Endothelial cell of umbilical vein (primary cell): ENCODE measurements at regions of chr7 and their contacts with region 1.

Region 1: DNA sequence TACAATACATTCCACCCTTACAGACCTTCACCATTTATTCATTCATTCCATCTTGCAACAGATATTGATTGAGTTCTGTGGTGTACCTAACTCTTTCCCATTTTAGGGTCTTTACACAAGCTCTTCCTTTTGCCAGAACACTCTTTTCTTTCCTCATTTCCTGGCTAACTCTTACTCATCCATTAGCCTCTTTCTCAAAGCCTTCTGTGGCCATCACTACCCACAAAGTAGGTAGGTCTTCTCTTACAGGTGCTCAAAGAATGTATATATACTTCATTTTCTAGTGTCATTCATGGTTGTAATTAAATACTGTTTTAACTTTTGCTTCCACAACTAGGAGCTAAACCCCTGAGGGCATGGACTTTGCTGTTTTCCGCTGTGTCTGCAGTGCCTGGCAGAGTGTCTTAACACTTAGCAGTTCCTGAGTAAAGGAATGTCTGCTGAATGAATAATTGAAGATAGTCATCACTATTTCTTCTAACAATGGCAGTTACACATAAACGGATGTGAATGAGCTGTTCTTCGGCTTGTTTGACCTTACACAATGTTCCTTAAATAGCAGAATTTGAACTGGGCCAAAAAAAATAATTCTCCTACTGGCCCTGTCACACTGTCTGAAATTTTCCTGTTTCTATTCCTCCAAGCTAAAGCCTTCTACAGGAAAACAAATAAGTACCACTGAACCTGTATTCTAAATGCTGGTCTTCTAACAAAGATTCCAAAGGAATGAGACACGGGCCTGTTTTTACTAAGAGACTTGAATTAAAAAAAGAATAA is 15.1 kb downstream of the BCAP29 start:
- DNase-seq: peak; percentile 98
- H3K4me3 ChIP-seq: peak overlapping the region in 1 of 3 experiments; percentile 7
- H3K27ac ChIP-seq: peak overlapping the region; percentile 97
- H3K4me1 ChIP-seq: peaks cover 57% of the 10 kb centered on the region
- H3K27me3 ChIP-seq: no peaks in the 10 kb centered on the region
- CTCF ChIP-seq: no peak
- POLR2A ChIP-seq: no peak

Region 2: GRCh38 chr7:107450970-107451369 is 144.2 kb before region 1 on chr7:
- CTCF ChIA-PET with region 1: no interaction called
- POLR2A ChIA-PET with region 1: no interaction called
- dilution Hi-C with region 1: no loop called
- intact Hi-C with region 1: no loop called
- DNase-seq: no peak
- H3K4me3 ChIP-seq: no peak overlapping the region
- H3K27ac ChIP-seq: no peak overlapping the region
- H3K4me1 ChIP-seq: no peaks in the 10 kb centered on the region
- H3K27me3 ChIP-seq: no peaks in the 10 kb centered on the region
- CTCF ChIP-seq: no peak
- POLR2A ChIP-seq: no peak

Region 3: DNA sequence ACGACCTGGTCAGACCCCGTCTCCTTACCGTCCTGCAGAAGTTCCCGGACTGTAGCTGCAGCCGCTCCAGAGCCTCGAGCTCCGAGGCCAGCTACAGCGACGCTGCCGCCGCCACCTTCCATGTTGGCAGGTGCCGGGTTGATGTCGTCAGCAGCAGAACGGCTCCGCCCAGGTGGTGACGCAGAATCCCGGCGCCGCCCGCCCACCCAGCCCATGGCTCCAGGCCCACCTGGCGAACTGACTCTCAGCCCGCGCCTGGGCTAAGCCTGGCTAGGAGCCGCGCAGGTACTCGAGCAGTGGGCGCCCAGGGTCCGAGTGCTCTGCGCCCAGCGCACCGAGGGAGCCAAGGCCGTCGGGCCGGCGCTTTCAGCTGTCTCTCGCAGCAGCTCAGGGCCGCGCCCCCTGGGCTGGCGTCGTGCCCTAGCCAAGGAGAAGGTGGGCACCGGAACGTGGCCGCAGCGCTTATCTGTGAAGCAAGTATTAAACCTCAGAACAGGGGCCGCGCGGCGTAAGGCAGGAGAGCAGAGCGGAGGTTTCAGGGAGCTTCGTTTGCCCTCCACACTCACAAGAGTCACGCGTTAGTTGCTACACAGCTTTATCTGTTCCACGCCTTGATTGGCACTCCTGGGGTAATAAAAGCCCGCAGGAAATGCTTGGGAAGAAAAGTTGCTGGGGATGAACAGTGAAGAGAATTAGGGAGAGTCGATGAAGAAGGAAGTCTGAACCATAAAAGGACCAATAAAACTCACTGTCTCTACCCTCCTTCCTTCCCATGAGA is 31.2 kb before region 1 on chr7 and contains the starts of genes COG5 and DUS4L:
- CTCF ChIA-PET with region 1: interaction called, 10 read pairs
- POLR2A ChIA-PET with region 1: interaction called, 5 read pairs
- dilution Hi-C with region 1: no loop called
- intact Hi-C with region 1: loop called (anchors 1 kb)
- DNase-seq: peak; percentile 89
- H3K4me3 ChIP-seq: peak within 1 kb of the TSS; percentile 87 to 99 (median 95)
- H3K27ac ChIP-seq: peak within 1 kb of the TSS; percentile 91
- H3K4me1 ChIP-seq: peaks cover 33% of the 10 kb centered on the region
- H3K27me3 ChIP-seq: no peaks in the 10 kb centered on the region
- CTCF ChIP-seq: no peak
- POLR2A ChIP-seq: peak; percentile 88
- total RNA-seq, gene COG5: 42.4 and 45.3 TPM in 2 replicates
- total RNA-seq, gene DUS4L: 9.6 and 9.8 TPM in 2 replicates

Region 4: GRCh38 chr7:107579885-107580715 is 15.0 kb before region 1 on chr7 and contains the start of gene BCAP29:
- CTCF ChIA-PET with region 1: interaction called, 20 read pairs
- POLR2A ChIA-PET with region 1: interaction called, 6 read pairs
- dilution Hi-C with region 1: no loop called
- intact Hi-C with region 1: loop called (anchors 1 kb)
- DNase-seq: peak; percentile 73
- H3K4me3 ChIP-seq: peak within 1 kb of the TSS; percentile 74 to 99 (median 99)
- H3K27ac ChIP-seq: peak within 1 kb of the TSS; percentile 95
- H3K4me1 ChIP-seq: peaks cover 24% of the 10 kb centered on the region
- H3K27me3 ChIP-seq: no peaks in the 10 kb centered on the region
- CTCF ChIP-seq: no peak
- POLR2A ChIP-seq: peak; percentile 77
- total RNA-seq, gene BCAP29: 162 and 175 TPM in 2 replicates

Region 5: GRCh38 chr7:107691716-107692115 is 96.6 kb after region 1 on chr7:
- CTCF ChIA-PET with region 1: interaction called, 3 read pairs
- POLR2A ChIA-PET with region 1: no interaction called
- dilution Hi-C with region 1: no loop called
- intact Hi-C with region 1: loop called (anchors 2 kb)
- DNase-seq: peak; percentile 73
- H3K4me3 ChIP-seq: no peak overlapping the region
- H3K27ac ChIP-seq: no peak overlapping the region
- H3K4me1 ChIP-seq: peaks cover 31% of the 10 kb centered on the region
- H3K27me3 ChIP-seq: no peaks in the 10 kb centered on the region
- CTCF ChIP-seq: no peak
- POLR2A ChIP-seq: no peak

Region 6: GRCh38 chr7:107743567-107744344 is 148.6 kb after region 1 on chr7 and contains the start of gene CBLL1:
- CTCF ChIA-PET with region 1: interaction called, 4 read pairs
- POLR2A ChIA-PET with region 1: no interaction called
- dilution Hi-C with region 1: no loop called
- intact Hi-C with region 1: loop called (anchors 1 kb)
- DNase-seq: peak; percentile 98
- H3K4me3 ChIP-seq: peak within 1 kb of the TSS; percentile 45 to 94 (median 79)
- H3K27ac ChIP-seq: peak within 1 kb of the TSS; percentile 96
- H3K4me1 ChIP-seq: peaks cover 38% of the 10 kb centered on the region
- H3K27me3 ChIP-seq: no peaks in the 10 kb centered on the region
- CTCF ChIP-seq: peak; percentile 65 to 76
- POLR2A ChIP-seq: peak; percentile 2
- total RNA-seq, gene CBLL1: 30.6 and 31.1 TPM in 2 replicates